ENCODE measurements at regions of chr1 and their contacts with region 1.

Region 1: DNA sequence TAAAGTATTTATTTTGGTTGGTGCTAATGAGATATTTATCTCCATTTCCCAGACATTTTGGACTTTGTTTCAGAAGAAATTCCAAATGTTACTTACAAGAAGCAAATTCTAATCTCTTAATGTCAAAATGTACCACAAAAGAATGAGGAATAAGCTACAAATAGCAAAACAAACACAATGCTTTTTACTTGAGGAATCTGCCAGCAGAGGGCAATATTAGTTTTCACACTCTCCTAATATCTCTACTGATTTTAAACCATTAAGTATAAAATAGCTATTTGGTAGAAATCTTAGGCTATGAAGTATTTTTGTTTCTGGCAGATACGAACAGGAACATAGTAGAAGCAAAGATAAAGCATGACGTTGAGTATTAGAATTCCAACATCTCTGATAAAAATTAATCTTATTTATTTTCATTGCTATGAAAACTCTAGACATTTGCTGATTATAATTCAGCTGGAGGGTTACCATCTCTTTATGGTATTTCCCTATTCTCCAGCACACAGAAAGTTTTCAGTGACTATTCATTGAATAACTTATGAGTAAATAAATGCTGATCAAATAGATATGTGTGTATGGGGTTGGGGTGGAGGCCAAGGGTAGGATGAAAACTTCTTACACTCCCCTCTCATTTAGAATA is 13.4 kb upstream of the HMCN1 start:
- DNase-seq: no peak
- ATAC-seq: no peak
- H3K4me3 ChIP-seq: no peak overlapping the region
- H3K27ac ChIP-seq: no peak overlapping the region
- H3K4me1 ChIP-seq: no peaks in the 10 kb centered on the region
- H3K27me3 ChIP-seq: no peaks in the 10 kb centered on the region
- CTCF ChIP-seq: peak; percentile 60; the same call in 1 of the 2 replicates

Region 2: DNA sequence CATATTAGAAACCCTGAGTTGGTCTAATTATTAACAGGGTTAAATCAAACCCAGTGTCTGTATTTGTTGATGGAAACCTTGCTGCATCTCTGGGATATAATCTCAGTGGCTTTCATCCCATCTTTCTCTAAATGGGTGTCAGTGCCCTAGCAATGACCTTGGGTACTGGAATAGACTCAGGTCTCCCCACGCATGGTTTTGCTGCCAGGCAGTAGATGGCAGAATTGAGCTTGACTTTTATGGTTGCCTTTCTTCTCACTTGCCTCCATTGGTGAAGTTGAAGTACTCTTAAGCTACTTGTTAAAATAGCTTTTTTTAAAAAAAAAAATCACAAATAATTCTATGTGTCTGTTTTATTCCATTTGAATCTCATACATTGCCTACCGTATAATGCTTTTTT is 68.4 kb before region 1 on chr1:
- CTCF ChIA-PET with region 1: no interaction called
- POLR2A ChIA-PET with region 1: no interaction called
- in situ Hi-C with region 1: no loop called
- intact Hi-C with region 1: no loop called
- DNase-seq: no peak
- ATAC-seq: no peak
- H3K4me3 ChIP-seq: no peak overlapping the region
- H3K27ac ChIP-seq: peak overlapping the region; percentile 79; the same call in 1 of the 2 replicates
- H3K4me1 ChIP-seq: peaks cover 4% of the 10 kb centered on the region; the same call in 1 of the 2 replicates
- H3K27me3 ChIP-seq: no peaks in the 10 kb centered on the region
- CTCF ChIP-seq: peak; percentile 40

Region 3: DNA sequence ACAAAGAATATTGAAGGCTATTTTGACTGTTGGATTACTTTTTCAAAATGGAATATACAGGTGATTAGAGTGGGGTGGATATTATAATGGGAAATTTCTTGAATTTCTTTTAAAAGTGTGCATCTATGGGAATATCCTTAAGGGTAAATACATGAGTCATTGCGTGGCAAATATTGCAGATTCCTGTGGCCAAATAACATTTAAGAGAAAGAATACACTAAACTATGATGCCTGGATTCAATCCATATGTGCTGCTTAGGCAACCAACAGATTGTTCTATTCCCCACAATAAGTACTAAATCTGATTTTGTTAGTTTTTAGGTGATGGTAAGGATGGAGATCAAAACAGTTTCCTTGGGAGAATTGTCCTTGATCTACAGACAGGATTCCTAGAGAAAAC is 133.0 kb after region 1 on chr1:
- CTCF ChIA-PET with region 1: no interaction called
- POLR2A ChIA-PET with region 1: interaction called, 10 read pairs
- in situ Hi-C with region 1: no loop called
- intact Hi-C with region 1: no loop called
- DNase-seq: no peak
- ATAC-seq: no peak
- H3K4me3 ChIP-seq: no peak overlapping the region
- H3K27ac ChIP-seq: no peak overlapping the region
- H3K4me1 ChIP-seq: no peaks in the 10 kb centered on the region
- H3K27me3 ChIP-seq: no peaks in the 10 kb centered on the region; the same call in 1 of the 2 replicates
- CTCF ChIP-seq: no peak